Ascending aorta (tissue), 2 donors: ENCODE measurements at regions of chr4 and their contacts with region 1.

Region 1: GRCh38 chr4:112938461-112939058 is 110.9 kb upstream of the ANK2 start:
- DNase-seq: no peak
- H3K4me3 ChIP-seq: no peak overlapping the region
- H3K27ac ChIP-seq: no peak overlapping the region
- H3K4me1 ChIP-seq: no peaks in the 10 kb centered on the region
- H3K27me3 ChIP-seq: no peaks in the 10 kb centered on the region
- CTCF ChIP-seq: peak; percentile 27 to 79 (median 75)

Region 2: GRCh38 chr4:112636688-112637551 is 301.6 kb before region 1 on chr4 and contains the starts of genes LARP7 and ZGRF1:
- intact Hi-C with region 1: loop called (anchors 1 kb)
- DNase-seq: peak; percentile 97 to 100
- H3K4me3 ChIP-seq: peak within 1 kb of the TSS; percentile 67 to 82
- H3K27ac ChIP-seq: peak within 1 kb of the TSS; percentile 94 to 98
- H3K4me1 ChIP-seq: peaks cover 0 to 11% of the 10 kb centered on the region in 2 donors
- H3K27me3 ChIP-seq: no peaks in the 10 kb centered on the region
- CTCF ChIP-seq: peak; percentile 97 to 100 (median 99)
- total RNA-seq, gene LARP7: 7.3 TPM
- total RNA-seq, gene ZGRF1: 0.11 TPM

Region 3: DNA sequence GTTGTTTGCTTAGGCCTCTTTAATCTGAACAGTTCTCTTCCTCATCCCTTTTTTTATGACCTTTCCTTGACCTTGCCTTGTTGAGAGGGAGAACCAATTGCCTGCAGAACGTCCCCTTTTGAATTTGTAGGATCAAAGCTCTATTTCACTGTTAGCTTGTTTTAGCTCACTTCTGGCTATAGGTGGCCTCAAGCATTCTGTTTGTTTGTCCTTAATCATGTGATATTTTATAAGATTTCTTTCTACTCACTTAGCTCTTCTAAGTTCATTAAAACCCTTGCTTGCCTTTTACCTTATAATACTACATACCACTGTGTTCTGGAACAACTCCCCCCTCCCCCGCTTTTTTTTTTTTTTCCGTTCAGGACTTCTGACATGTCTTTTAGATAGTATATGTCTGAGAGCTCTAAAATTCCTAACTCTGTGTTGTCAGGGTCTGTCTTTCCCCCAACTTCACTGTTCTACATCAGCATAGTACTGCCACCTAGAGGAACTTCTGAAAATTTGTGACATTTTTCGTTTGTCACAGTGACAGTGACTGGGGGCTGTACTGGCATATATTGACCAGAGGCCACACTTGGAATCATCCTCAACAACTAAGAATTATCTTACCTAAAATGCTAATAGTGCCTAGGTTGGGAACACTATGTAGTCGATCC is 173.1 kb before region 1 on chr4:
- intact Hi-C with region 1: loop called (anchors 2 kb)
- DNase-seq: no peak
- H3K4me3 ChIP-seq: no peak overlapping the region
- H3K27ac ChIP-seq: no peak overlapping the region
- H3K4me1 ChIP-seq: no peaks in the 10 kb centered on the region
- H3K27me3 ChIP-seq: no peaks in the 10 kb centered on the region
- CTCF ChIP-seq: peak in 2 of 3 experiments; percentile 22 to 48

Region 4: DNA sequence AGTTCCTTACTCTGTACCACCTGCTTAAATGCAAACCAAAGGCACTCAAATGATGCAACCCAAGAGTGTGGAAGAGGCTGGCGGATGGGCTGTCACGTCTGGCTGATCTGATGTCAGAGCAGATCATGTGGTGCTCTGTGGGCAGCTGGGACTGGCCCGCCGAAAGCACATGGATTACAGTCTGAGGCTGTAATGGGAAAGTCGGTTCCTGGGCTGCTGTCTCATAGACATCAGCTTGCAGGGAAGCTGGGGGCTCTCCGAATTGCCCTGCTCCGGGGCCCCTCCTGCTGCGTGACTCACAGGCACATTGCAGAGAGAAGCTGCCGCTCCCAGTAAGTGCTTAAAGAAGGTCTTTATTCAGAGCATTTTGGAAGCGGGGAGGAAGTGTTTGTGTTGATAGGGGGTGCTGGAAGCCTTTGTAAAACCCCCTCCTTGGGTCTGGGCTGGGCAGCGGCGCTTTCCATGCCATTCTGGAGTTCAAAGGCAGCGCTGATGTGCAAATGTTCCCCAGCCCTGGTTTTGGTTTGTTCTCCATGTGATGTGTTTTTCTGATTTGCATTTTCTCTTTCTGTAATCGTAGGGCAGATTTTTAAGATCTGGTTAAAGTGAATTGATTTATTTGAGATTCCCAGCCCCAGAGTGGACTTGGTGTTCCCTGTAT is 120.5 kb before region 1 on chr4:
- intact Hi-C with region 1: loop called (anchors 1 kb)
- DNase-seq: peak; percentile 40 to 88
- H3K4me3 ChIP-seq: peak overlapping the region; percentile 54 to 69
- H3K27ac ChIP-seq: peak overlapping the region; percentile 22 to 25
- H3K4me1 ChIP-seq: peaks cover 0 to 11% of the 10 kb centered on the region in 2 donors
- H3K27me3 ChIP-seq: no peaks in the 10 kb centered on the region
- CTCF ChIP-seq: no peak

Region 5: GRCh38 chr4:112857461-112857860 is 81.1 kb before region 1 on chr4:
- intact Hi-C with region 1: loop called (anchors 5 kb)
- DNase-seq: peak in 1 of 2 donors; percentile 69
- H3K4me3 ChIP-seq: no peak overlapping the region
- H3K27ac ChIP-seq: peak overlapping the region; percentile 40 to 68
- H3K4me1 ChIP-seq: peaks cover 0 to 8% of the 10 kb centered on the region in 2 donors
- H3K27me3 ChIP-seq: no peaks in the 10 kb centered on the region
- CTCF ChIP-seq: no peak